K562 (cell line): ENCODE measurements at regions of chr6 and their contacts with region 1.

Region 1: DNA sequence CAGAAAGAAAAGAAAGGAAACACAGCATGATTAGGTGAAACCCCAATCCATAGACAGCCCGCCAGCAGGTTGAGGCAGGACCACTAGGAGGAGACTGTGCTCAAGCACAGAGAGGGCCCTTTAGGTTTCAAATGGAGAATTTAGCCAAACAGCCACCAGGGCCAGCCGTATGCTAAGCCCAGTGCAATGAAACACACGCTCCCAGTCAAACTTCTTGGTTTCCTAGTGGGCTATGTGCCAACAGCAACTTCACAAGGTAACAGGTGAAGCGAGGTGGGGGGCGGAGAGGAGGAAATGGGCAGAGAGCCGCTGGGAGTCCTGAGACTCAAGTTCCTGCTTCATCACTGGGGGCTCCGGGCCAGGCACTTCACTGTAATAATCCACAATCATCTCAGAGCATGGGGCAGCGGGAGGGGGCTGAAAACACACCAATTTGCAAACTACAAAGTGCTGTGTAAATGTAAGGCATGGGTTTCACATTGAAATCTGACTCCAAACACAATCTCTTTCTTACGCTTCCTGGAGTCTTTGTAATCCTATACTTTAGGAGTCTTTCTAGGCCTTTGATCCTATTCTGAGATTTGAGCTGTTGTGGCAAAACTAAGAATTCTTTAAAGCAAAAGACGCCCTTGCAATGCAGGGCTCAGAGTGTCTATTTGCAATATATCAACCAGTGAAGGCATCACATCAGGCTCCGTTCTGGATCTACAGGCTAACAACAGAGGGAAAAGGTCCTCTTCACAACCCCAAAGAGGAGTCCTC is 117.3 kb downstream of the OPRM1 start:
- DNase-seq: peak in 3 of 4 experiments; percentile 18 to 37 (median 21)
- ATAC-seq: peak; percentile 97
- H3K4me3 ChIP-seq: no peak overlapping the region
- H3K27ac ChIP-seq: no peak overlapping the region
- H3K4me1 ChIP-seq: no peaks in the 10 kb centered on the region
- H3K27me3 ChIP-seq: peaks cover 0 to 2% of the 10 kb centered on the region in 2 experiments; a peak in 1 of 5 replicates
- CTCF ChIP-seq: peak; percentile 64 to 78 (median 74)
- EP300 ChIP-seq: no peak
- POLR2A ChIP-seq: no peak
- RAD21 ChIP-seq: peak; percentile 18 to 50; a peak in 3 of 4 replicates

Region 2: DNA sequence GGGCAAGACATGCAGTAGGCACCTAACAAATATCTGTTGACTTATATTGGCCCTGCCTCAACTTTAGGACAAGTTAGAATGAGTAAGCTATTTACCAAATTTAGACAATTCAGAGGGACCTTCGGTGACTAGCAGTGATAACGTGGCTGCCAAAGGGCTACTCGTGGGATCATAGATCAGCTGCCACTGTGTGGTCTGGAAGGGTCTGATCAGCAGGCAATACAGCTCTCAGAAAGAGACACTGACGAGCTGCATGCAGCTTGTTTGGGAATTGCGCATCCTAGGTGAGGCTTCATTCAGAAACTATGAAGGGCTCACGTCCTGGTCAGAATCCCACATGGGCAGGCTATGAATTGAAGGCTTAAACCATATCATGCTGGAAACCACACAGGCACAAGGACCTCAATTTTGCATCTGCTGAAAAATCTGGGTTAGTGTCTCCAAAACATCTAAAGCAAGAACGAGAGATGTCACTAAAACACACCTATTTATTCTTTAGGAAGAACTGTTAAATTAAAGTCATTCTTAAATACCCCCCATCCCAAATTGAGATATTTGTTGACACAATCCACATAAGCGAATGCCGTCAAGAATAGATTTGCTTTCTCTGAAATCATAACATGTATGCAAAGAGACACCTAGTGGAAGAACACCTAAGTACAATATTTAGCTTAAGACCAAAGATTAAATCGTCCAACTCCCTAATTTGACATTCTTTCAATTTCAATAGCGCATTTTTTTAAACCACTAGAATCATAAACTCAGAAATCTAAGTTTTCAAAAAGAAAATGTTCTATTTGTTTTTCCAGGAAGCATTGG is 120.7 kb after region 1 on chr6:
- CTCF ChIA-PET with region 1: interaction called, 7 read pairs
- POLR2A ChIA-PET with region 1: no interaction called
- in situ Hi-C with region 1: no loop called
- intact Hi-C with region 1: loop called (anchors 1 kb)
- DNase-seq: peak; percentile 20 to 38 (median 25)
- ATAC-seq: peak; percentile 78
- H3K4me3 ChIP-seq: no peak overlapping the region
- H3K27ac ChIP-seq: no peak overlapping the region
- H3K4me1 ChIP-seq: no peaks in the 10 kb centered on the region
- H3K27me3 ChIP-seq: no peaks in the 10 kb centered on the region
- CTCF ChIP-seq: peak; percentile 38 to 68 (median 44); a peak in 4 of 6 replicates
- EP300 ChIP-seq: no peak
- POLR2A ChIP-seq: no peak
- RAD21 ChIP-seq: peak; percentile 42 to 58

Region 3: DNA sequence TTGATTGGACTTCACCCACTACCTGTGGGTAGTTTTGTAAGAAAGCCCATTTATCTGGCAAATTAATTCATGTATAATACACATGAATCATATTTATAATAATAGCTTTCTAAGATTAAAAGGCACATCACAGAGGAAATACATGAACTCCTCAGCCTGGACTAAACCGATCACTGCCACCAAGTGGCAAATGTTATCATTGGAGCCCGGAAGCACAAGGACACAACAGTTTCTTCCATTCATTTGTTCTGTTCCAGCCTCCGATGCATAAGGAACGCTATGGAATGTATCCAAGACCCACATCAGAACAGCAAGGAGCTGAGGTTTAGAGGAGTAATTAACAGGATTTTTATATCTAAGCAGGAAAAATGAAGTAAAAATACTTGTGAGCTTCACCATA is 214.2 kb after region 1 on chr6:
- CTCF ChIA-PET with region 1: interaction called, 7 read pairs
- POLR2A ChIA-PET with region 1: no interaction called
- in situ Hi-C with region 1: no loop called
- intact Hi-C with region 1: loop called (anchors 1 kb)
- DNase-seq: peak in 2 of 4 experiments; percentile 26 to 41
- ATAC-seq: peak; percentile 85
- H3K4me3 ChIP-seq: no peak overlapping the region
- H3K27ac ChIP-seq: no peak overlapping the region
- H3K4me1 ChIP-seq: no peaks in the 10 kb centered on the region
- H3K27me3 ChIP-seq: peaks cover 25 to 35% of the 10 kb centered on the region in 2 experiments; a peak in 4 of 5 replicates
- CTCF ChIP-seq: peak; percentile 41 to 59 (median 51); a peak in 4 of 6 replicates
- EP300 ChIP-seq: no peak
- POLR2A ChIP-seq: no peak
- RAD21 ChIP-seq: peak; percentile 42 to 46; a peak in 3 of 4 replicates

Region 4: DNA sequence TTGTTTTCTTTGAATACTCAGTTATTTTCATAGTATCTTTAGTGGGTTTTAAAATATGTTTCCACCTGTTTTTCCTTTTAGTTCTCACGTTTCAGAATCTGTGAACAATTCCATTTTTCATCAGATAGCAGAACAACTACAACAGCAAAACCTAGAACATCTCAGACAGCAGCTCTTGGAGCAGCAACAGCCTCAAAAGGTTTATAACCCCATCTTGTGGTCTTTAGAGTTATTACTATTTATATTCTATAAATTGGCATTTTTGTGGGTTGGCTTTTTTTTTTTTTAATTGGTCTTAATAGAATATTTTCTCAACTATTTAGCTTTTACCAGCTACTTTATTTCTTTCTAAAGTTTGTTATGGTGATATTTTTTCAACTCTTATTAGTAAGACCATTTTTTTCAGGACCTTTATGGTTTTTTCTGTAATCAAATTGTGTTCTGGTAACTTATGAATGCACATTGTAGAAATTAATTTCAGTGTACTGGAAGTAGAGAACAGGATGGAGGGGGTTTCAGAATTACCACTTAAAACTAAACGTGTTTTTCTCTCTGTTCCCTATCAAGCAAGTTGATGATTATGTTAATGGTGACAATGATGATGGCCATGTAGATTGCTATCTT is 649.1 kb after region 1 on chr6:
- CTCF ChIA-PET with region 1: interaction called, 5 read pairs
- POLR2A ChIA-PET with region 1: no interaction called
- in situ Hi-C with region 1: loop called (anchors 25 kb)
- intact Hi-C with region 1: loop called (anchors 10 kb)
- DNase-seq: peak; percentile 28 to 42 (median 34)
- ATAC-seq: peak; percentile 69; the same call in 2 of the 3 replicates
- H3K4me3 ChIP-seq: no peak overlapping the region
- H3K27ac ChIP-seq: no peak overlapping the region
- H3K4me1 ChIP-seq: no peaks in the 10 kb centered on the region
- H3K27me3 ChIP-seq: no peaks in the 10 kb centered on the region
- CTCF ChIP-seq: peak in 2 of 3 experiments; percentile 41 to 74; a peak in 3 of 6 replicates
- EP300 ChIP-seq: no peak
- POLR2A ChIP-seq: no peak
- RAD21 ChIP-seq: peak; percentile 61 to 63